PC-3 (cell line): ENCODE measurements at regions of chr10 and their contacts with region 1.

Region 1: DNA sequence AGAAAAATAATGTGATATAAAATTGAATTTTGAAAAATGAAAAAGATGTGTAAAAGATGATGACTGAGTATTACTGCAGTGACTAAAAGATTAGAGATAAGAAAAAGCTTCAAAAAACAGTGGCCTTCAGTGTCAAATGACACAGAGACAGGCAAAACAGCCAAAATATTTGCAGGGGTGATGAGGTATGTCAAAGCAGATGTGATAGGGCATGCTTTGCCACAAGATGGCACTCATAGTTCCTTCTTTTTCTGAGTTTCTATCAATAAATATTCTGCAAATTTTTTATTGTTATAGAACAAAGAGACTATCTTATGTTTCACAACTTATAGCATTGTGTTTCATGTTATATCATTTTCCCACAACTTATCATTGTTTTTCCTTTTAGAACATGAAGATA is 344.1 kb upstream of the HPS1 start:
- DNase-seq: peak; percentile 20
- ATAC-seq: peak; percentile 24; the same call in 1 of the 2 replicates
- H3K4me3 ChIP-seq: no peak overlapping the region
- H3K27ac ChIP-seq: no peak overlapping the region
- H3K4me1 ChIP-seq: no peaks in the 10 kb centered on the region
- H3K27me3 ChIP-seq: peaks cover 14% of the 10 kb centered on the region; the same call in 1 of the 2 replicates
- CTCF ChIP-seq: peak; percentile 53

Region 2: GRCh38 chr10:98536551-98536950 is 254.3 kb before region 1 on chr10:
- CTCF ChIA-PET with region 1: no interaction called
- POLR2A ChIA-PET with region 1: no interaction called
- intact Hi-C with region 1: no loop called
- DNase-seq: peak; percentile 62
- ATAC-seq: peak; percentile 54
- H3K4me3 ChIP-seq: no peak overlapping the region
- H3K27ac ChIP-seq: no peak overlapping the region
- H3K4me1 ChIP-seq: peaks cover 5% of the 10 kb centered on the region; the same call in 1 of the 2 replicates
- H3K27me3 ChIP-seq: peaks cover 8% of the 10 kb centered on the region
- CTCF ChIP-seq: no peak

Region 3: DNA sequence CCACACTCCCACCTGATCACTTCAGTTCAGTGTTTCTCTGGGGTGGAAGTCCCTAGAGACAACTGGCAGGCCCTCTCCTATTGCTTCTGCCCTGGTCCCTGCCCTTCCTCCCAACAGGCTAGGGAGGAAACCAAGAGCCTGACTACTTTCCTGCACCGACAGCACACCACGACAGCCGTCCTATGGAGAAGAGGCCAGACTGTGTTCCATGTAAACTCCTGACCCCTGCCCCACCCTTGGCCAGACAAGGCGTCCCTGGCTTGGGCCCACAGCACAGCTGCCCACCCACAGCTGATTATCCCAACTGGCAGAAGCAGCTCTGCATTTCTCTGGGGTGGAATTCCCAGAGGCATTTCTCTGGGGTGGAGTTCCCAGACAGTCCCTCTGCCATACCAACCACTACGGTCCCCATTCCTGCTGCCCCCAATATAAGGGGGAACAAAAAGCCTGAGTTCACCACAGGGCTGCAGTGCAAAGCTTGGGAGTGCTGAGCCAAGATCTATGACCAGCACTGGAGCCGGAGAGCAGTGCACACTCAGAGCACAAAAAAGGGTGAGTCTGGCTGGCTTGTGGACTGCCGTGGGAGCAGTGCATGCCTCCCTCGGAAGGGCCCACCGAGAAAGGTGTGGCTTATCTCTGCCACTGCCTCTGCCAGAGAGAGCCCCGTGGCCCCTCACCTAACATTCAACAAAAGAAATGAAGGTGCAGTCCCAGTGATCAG is 251.4 kb after region 1 on chr10:
- CTCF ChIA-PET with region 1: no interaction called
- POLR2A ChIA-PET with region 1: no interaction called
- intact Hi-C with region 1: loop called (anchors 5 kb)
- DNase-seq: no peak
- ATAC-seq: no peak
- H3K4me3 ChIP-seq: no peak overlapping the region
- H3K27ac ChIP-seq: no peak overlapping the region
- H3K4me1 ChIP-seq: no peaks in the 10 kb centered on the region
- H3K27me3 ChIP-seq: no peaks in the 10 kb centered on the region
- CTCF ChIP-seq: no peak

Region 4: DNA sequence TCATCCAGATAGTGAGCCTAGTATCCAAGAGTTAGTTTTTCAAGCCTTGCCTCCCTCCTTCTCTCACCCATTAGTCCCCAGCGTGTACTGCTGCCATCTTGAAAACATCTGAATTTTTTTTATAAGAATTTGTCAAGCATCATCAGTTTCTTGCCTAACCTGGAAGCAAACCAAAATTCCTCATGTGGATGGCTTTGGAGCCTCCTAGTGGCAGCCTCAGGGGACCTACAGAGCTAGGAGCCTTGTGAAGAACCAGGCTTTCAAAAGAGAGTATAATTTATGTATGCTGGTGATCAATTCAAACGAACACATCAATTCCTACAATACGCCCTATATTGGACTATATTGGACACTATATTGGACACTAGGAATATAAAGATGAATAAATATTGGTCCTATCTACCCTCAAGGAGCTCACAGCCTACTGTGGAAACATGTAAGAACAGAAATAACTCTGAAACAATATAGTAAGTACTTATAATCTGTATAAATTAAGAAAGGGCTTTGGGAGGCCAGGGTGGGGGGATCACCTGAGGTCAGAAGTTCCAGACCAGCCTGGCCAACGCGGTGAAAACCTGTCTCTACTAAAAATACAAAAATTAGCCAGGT is 381.4 kb after region 1 on chr10:
- CTCF ChIA-PET with region 1: no interaction called
- POLR2A ChIA-PET with region 1: no interaction called
- intact Hi-C with region 1: loop called (anchors 5 kb)
- DNase-seq: peak; percentile 64
- ATAC-seq: peak; percentile 43; the same call in 1 of the 2 replicates
- H3K4me3 ChIP-seq: no peak overlapping the region
- H3K27ac ChIP-seq: no peak overlapping the region
- H3K4me1 ChIP-seq: no peaks in the 10 kb centered on the region
- H3K27me3 ChIP-seq: peaks cover 10% of the 10 kb centered on the region; the same call in 1 of the 2 replicates
- CTCF ChIP-seq: peak; percentile 72